Naive thymus-derived CD4-positive, alpha-beta T cell (primary cell): ENCODE measurements at regions of chr3 and their contacts with region 1.

Region 1: DNA sequence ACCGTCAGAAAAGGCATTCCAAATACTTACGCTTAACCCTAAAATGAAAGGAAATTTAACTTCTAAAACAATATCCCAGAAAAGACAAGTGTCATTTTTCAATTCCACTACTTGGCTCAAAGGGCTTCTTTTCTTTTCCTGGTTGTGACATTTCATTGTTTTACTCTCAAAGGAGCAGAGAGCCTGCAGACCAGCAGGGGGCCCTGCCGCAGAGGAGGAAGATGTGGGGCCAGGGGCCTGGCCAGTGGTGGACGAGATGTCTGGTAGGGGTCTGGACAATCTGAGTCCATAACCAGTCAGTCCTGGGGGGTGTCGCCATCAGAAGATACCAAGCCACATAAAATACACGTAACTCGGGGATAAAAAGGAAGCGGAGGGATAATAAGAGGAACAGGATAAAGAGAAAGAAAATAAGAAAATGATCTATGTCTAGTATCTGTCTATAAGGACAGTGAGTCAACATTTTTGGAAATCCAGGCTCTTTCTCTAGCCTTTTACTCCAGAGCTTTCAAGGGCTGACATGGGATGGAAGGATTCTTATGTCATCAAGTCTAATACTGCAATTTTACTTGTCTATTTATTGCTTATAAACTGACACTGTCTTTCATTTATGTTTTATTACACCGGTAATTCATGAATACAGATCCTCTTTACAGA is 54.2 kb upstream of the ARHGEF3 start:
- DNase-seq: peak in 2 of 9 donors; percentile 12 to 35
- ATAC-seq: peak; percentile 50
- H3K4me3 ChIP-seq: no peak overlapping the region
- H3K4me3 Mint-ChIP-seq: no peak overlapping the region
- H3K27ac ChIP-seq: no peak overlapping the region
- H3K27ac Mint-ChIP-seq: peak overlapping the region in 6 of 9 donors; percentile 4 to 78 (median 44)
- H3K4me1 ChIP-seq: peaks cover 6 to 9% of the 10 kb centered on the region in 2 donors
- H3K4me1 Mint-ChIP-seq: peaks cover 34 to 63% (median 55%) of the 10 kb centered on the region in 7 donors
- H3K27me3 ChIP-seq: no peaks in the 10 kb centered on the region
- H3K27me3 Mint-ChIP-seq: no peaks in the 10 kb centered on the region

Region 2: DNA sequence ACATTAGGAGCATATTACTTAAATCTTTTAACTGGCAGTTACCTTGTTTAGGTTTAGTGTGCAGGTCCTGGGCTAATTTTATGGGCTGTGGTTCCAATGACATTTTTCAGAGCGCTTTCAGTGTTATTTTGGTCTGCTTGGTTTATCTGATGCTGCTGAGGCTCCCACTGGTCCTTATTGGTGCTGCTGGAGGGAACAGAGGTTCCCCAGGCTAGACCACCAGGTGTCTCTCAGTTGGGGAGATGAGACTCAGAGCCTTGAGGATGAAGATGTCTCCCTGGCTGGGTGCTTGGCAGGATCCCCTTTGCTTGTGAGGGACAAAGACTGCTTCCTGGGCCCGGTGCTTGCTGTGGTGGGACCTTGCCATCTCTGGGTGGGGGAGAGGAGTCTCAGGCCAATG is 144.6 kb before region 1 on chr3:
- CTCF ChIA-PET with region 1: no interaction called
- POLR2A ChIA-PET with region 1: no interaction called
- intact Hi-C with region 1: no loop called
- DNase-seq: no peak
- ATAC-seq: no peak
- H3K4me3 ChIP-seq: no peak overlapping the region
- H3K4me3 Mint-ChIP-seq: no peak overlapping the region
- H3K27ac ChIP-seq: no peak overlapping the region
- H3K27ac Mint-ChIP-seq: peak overlapping the region in 4 of 9 donors; percentile 22 to 69 (median 40)
- H3K4me1 ChIP-seq: no peaks in the 10 kb centered on the region
- H3K4me1 Mint-ChIP-seq: peaks cover 0 to 9% (median 0%) of the 10 kb centered on the region in 7 donors
- H3K27me3 ChIP-seq: no peaks in the 10 kb centered on the region
- H3K27me3 Mint-ChIP-seq: no peaks in the 10 kb centered on the region

Region 3: DNA sequence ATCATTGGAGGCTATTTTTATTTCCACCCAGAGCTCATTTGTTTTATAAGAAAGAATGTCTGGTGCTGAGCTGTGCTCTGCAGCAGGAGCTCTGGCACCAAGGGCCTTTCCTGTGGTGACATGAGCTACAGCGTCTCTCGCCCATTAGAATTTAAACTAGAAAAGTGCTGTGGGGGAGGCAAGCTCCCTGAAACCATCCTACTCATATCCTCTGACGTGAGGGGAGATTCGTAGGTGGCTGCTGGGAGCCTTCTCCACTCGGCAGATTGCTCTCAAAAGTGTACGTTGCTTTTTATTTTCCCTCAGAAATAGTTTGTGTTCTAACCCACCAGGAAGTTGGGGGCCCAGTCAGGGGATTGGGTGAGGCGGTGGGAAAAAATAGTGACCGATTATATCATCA is 22.1 kb after region 1 on chr3:
- CTCF ChIA-PET with region 1: interaction called, 5 read pairs
- POLR2A ChIA-PET with region 1: interaction called, 4 read pairs
- intact Hi-C with region 1: loop called in 1 of 2 experiments (anchors 2 kb)
- DNase-seq: peak in 7 of 9 donors; percentile 29 to 65 (median 49)
- ATAC-seq: peak; percentile 84
- H3K4me3 ChIP-seq: no peak overlapping the region
- H3K4me3 Mint-ChIP-seq: peak overlapping the region; percentile 48 to 85 (median 73)
- H3K27ac ChIP-seq: peak overlapping the region; percentile 57
- H3K27ac Mint-ChIP-seq: peak overlapping the region; percentile 79 to 95 (median 91)
- H3K4me1 ChIP-seq: peaks cover 10 to 57% of the 10 kb centered on the region in 2 donors
- H3K4me1 Mint-ChIP-seq: peaks cover 33 to 88% (median 78%) of the 10 kb centered on the region in 7 donors
- H3K27me3 ChIP-seq: no peaks in the 10 kb centered on the region
- H3K27me3 Mint-ChIP-seq: no peaks in the 10 kb centered on the region

Region 4: DNA sequence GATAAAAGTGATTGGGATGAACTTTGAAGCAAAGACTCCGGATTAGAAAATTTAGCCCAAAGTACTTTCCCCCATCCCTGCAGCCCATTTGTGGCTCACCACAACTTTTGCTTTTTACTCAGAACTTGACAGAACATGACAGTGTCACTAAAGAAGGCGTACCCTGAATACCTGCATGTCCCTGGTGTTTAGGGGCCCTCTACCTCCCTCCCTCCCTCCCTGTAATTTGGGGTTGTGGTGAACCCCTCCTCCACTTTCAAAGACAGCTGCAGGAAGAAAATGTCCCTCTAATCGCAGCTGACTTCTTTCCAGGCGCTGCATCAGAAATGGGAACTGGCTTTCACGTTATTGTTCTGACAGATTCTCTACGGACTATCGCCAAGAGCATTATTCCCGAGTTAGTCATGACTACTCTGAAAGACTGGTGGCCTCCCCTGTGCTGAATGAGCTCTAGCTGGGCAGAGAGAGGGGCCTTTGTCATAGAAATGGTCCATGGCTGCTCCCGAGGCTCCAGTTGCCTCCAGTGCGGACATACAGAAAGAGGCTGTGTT is 39.0 kb after region 1 on chr3:
- CTCF ChIA-PET with region 1: no interaction called
- POLR2A ChIA-PET with region 1: no interaction called
- intact Hi-C with region 1: loop called in 1 of 2 experiments (anchors 5 kb)
- DNase-seq: peak in 2 of 9 donors; percentile 21 to 33
- ATAC-seq: peak; percentile 62
- H3K4me3 ChIP-seq: no peak overlapping the region
- H3K4me3 Mint-ChIP-seq: peak overlapping the region; percentile 29 to 72 (median 45)
- H3K27ac ChIP-seq: peak overlapping the region; percentile 46
- H3K27ac Mint-ChIP-seq: peak overlapping the region in 8 of 9 donors; percentile 21 to 74 (median 61)
- H3K4me1 ChIP-seq: peaks cover 20 to 39% of the 10 kb centered on the region in 2 donors
- H3K4me1 Mint-ChIP-seq: peaks cover 29 to 86% (median 70%) of the 10 kb centered on the region in 7 donors
- H3K27me3 ChIP-seq: no peaks in the 10 kb centered on the region
- H3K27me3 Mint-ChIP-seq: no peaks in the 10 kb centered on the region

Region 5: DNA sequence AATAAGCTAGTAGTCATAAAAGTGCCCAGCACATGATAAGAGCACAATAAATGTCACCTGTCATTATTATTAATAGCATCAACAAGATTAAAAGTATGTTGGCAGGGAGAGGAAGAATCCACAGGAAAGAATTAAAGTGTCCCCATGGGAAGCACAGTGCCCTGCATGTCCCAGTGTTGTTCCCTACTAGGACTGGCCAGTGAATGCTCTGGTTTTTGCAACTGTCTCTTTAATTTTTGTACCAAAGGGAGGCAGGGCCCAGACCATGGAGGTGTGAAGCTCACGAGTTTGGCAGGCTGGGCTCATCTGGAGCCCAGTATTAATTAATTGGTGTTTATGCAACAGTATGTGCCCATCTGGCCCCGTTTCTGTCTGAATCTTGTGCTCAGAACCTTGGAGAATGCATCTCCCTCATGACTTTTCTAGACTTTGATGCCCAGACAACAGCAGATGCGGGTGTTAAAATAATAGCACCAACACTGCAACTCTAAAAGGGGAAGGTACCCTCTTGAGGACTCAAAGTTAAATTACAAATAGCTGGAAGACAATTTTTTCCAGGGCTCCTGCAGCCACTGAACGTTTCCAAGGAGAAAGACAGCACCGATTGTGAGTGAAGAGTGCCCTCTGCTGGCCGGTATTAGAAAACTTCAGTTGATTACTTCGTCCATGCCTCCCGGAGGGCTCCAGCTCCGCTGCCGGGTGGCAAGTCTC is 132.6 kb after region 1 on chr3:
- CTCF ChIA-PET with region 1: interaction called, 12 read pairs
- POLR2A ChIA-PET with region 1: no interaction called
- intact Hi-C with region 1: loop called (anchors 1 kb)
- DNase-seq: peak; percentile 45 to 76 (median 63)
- ATAC-seq: peak; percentile 85
- H3K4me3 ChIP-seq: no peak overlapping the region
- H3K4me3 Mint-ChIP-seq: peak overlapping the region in 5 of 10 donors; percentile 29 to 46 (median 42)
- H3K27ac ChIP-seq: no peak overlapping the region
- H3K27ac Mint-ChIP-seq: peak overlapping the region in 3 of 9 donors; percentile 28 to 81 (median 62)
- H3K4me1 ChIP-seq: peaks cover 3 to 9% of the 10 kb centered on the region in 2 donors
- H3K4me1 Mint-ChIP-seq: peaks cover 5 to 34% (median 18%) of the 10 kb centered on the region in 7 donors
- H3K27me3 ChIP-seq: no peaks in the 10 kb centered on the region
- H3K27me3 Mint-ChIP-seq: peaks cover 0 to 26% (median 5%) of the 10 kb centered on the region in 5 donors

Region 6: GRCh38 chr3:57752307-57752706 is 896.3 kb after region 1 on chr3:
- CTCF ChIA-PET with region 1: no interaction called
- POLR2A ChIA-PET with region 1: no interaction called
- intact Hi-C with region 1: no loop called
- DNase-seq: no peak
- ATAC-seq: no peak
- H3K4me3 ChIP-seq: no peak overlapping the region
- H3K4me3 Mint-ChIP-seq: no peak overlapping the region
- H3K27ac ChIP-seq: no peak overlapping the region
- H3K27ac Mint-ChIP-seq: no peak overlapping the region
- H3K4me1 ChIP-seq: peaks cover 3 to 5% of the 10 kb centered on the region in 2 donors
- H3K4me1 Mint-ChIP-seq: peaks cover 0 to 10% (median 9%) of the 10 kb centered on the region in 7 donors
- H3K27me3 ChIP-seq: no peaks in the 10 kb centered on the region
- H3K27me3 Mint-ChIP-seq: peaks cover 0 to 10% (median 0%) of the 10 kb centered on the region in 5 donors